Calu3 (cell line): ENCODE measurements at regions of chr1 and their contacts with region 1.

Region 1: GRCh38 chr1:187374130-187374529 is 545.4 kb downstream of the PLA2G4A start:
- DNase-seq: no peak
- H3K4me3 Mint-ChIP-seq: no peak overlapping the region
- H3K27ac Mint-ChIP-seq: no peak overlapping the region
- H3K4me1 Mint-ChIP-seq: no peaks in the 10 kb centered on the region
- H3K27me3 Mint-ChIP-seq: no peaks in the 10 kb centered on the region
- CTCF ChIP-seq: no peak

Region 2: DNA sequence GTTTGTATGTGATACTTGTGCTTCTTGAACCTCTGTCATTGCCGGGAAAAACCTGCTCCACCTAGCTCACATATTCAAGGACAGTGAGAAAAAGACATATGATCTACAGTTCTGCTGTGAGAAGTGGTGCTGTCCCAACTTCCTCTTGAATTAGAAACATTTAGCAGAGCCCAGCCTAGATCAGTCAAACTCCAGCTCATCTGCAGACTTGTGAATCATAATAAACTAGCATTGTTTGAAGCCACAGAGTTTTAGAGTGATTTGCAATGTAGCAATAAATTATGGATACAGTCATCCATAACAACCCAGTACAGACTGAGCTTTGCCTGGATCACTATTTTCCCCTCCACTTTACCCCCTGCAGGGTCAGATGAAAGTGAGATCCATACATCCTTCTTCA is 47.6 kb before region 1 on chr1:
- CTCF ChIA-PET with region 1: no interaction called
- intact Hi-C with region 1: loop called (anchors 2 kb)
- DNase-seq: no peak
- H3K4me3 Mint-ChIP-seq: no peak overlapping the region
- H3K27ac Mint-ChIP-seq: no peak overlapping the region
- H3K4me1 Mint-ChIP-seq: no peaks in the 10 kb centered on the region
- H3K27me3 Mint-ChIP-seq: no peaks in the 10 kb centered on the region
- CTCF ChIP-seq: no peak

Region 3: DNA sequence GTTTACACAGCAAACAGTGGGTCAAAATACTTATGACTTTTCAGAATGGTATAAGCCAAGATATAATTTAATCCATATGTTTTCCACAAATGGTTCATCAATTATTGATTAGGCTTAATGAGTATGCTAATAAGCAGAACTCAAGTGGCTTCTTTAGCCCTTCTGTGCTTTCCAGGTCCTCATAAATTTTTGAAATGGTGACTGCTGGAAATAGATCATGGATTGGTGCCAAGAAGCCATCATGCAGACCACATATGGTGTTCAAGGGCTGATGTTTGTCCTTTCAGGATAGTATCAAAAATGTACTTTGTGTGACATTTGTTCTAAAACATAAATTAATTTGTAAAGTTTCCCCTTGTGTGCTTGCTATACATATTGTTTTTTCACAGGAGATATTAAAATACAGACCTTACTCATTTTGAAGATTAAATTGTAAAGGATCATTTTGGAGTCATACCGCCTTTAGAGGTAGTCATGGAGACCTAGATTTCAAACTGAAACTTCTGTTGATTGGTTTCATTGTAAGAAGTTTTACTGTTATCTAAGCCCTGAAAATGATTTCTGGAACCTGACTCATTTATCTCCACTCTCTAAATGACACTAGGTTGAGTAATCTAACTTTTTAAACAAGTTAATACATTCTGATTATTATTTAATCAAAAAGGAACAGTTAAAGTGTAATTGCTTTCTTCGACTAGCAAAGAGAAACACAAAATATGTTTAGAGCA is 37.5 kb before region 1 on chr1:
- CTCF ChIA-PET with region 1: no interaction called
- intact Hi-C with region 1: no loop called
- DNase-seq: no peak
- H3K4me3 Mint-ChIP-seq: no peak overlapping the region
- H3K27ac Mint-ChIP-seq: no peak overlapping the region
- H3K4me1 Mint-ChIP-seq: no peaks in the 10 kb centered on the region
- H3K27me3 Mint-ChIP-seq: no peaks in the 10 kb centered on the region
- CTCF ChIP-seq: no peak